ENCODE measurements at regions of chr6 and their contacts with region 1.

Region 1: DNA sequence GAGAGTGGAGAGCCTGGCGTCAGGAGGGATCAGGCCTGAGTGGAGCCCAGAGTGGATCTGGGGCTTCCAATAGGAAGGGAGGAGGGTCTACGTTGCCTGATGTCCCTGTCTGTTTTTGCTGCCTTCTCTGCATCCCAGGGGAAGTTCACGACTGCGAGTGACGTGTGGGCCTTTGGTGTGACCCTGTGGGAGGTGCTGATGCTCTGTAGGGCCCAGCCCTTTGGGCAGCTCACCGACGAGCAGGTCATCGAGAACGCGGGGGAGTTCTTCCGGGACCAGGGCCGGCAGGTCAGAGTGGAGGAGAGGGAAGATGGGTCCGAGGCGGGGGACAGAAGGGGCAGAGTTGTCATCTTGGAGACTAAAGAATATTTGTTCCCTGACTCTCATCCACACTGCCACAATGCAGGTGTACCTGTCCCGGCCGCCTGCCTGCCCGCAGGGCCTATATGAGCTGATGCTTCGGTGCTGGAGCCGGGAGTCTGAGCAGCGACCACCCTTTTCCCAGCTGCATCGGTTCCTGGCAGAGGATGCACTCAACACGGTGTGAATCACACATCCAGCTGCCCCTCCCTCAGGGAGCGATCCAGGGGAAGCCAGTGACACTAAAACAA is 9.2 kb upstream of the GTF2H4 start:
- DNase-seq: no peak
- ATAC-seq: 0 out of 2 replicates have a peak, but pooled peaks have one; percentile 12
- H3K4me3 ChIP-seq: no peak overlapping the region
- H3K27ac ChIP-seq: no peak overlapping the region
- H3K4me1 ChIP-seq: no peaks in the 10 kb centered on the region
- H3K27me3 ChIP-seq: no peaks in the 10 kb centered on the region
- CTCF ChIP-seq: no peak

Region 2: GRCh38 chr6:30781743-30782424 is 117.0 kb before region 1 on chr6:
- CTCF ChIA-PET with region 1: no interaction called
- POLR2A ChIA-PET with region 1: no interaction called
- in situ Hi-C with region 1: no loop called
- intact Hi-C with region 1: no loop called
- DNase-seq: peak; percentile 98
- ATAC-seq: peak; percentile 78
- H3K4me3 ChIP-seq: peak overlapping the region in 1 of 2 experiments; percentile 24; a peak in 2 of 4 replicates
- H3K27ac ChIP-seq: peak overlapping the region; percentile 90
- H3K4me1 ChIP-seq: peaks cover 62% of the 10 kb centered on the region
- H3K27me3 ChIP-seq: no peaks in the 10 kb centered on the region
- CTCF ChIP-seq: no peak

Region 3: DNA sequence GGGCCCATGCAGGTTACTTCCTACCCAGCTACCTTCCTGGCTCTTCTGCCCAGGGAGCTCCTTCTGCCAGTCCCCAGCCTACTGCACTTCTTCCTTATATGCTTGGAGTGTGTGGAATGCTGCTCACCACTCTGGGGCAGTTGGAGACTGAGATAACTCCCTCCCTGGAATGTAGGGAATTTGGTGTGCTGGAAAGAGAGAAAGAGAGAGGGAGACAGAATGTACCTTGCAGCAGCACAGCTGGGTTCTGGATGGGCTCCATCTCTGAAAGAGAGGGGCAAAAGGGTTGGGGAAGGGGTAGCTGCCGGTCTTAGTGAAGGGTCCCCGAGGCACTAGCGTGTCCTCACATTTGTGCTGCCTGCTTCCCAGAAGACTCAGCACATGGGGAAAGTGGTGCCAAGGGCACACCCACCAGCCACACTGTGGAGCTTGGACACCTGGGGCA is 54.7 kb before region 1 on chr6:
- CTCF ChIA-PET with region 1: no interaction called
- POLR2A ChIA-PET with region 1: interaction called, 10 read pairs
- in situ Hi-C with region 1: no loop called
- intact Hi-C with region 1: no loop called
- DNase-seq: no peak
- ATAC-seq: peak; percentile 90
- H3K4me3 ChIP-seq: no peak overlapping the region
- H3K27ac ChIP-seq: peak overlapping the region; percentile 78
- H3K4me1 ChIP-seq: peaks cover 33% of the 10 kb centered on the region
- H3K27me3 ChIP-seq: no peaks in the 10 kb centered on the region
- CTCF ChIP-seq: no peak

Region 4: DNA sequence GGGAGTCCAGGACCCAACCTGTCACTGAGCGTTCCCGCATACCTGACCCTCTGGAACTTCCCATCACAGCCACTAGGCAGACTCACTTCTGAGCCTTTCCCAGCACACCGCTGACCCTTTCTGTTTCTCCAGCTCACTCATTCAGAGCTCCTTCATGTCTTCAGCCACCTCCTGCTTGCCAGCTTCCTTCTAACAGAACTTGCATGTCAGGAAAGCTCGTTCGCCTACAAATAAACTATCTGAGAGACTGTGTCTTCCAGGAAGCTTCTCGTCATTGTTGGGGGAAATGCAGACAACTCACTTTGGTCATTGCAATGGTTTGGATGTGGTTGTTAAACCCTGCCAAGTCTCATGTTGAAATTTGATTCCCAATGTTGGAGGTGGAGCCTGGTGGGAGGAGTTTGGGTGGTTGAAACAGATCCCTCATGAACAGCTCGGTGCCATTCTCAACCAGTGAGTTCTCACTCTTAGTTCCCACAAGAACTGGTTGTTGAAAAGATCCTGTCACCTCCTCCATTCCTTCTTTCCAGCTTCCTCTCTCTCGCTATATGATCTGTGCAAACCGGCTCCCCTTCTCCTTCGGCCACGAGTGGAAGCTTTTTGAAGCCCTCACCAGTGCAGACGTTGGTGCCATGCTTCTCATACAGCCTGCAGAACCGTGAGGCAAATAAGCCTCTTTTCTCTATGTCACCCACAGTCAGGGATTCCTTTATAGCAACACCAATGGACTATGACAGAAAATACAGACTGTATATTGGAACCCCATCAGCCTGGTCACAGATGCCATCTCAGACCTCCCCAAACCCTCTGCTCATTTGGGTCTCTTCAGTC is 83.3 kb after region 1 on chr6:
- CTCF ChIA-PET with region 1: no interaction called
- POLR2A ChIA-PET with region 1: no interaction called
- in situ Hi-C with region 1: no loop called
- intact Hi-C with region 1: no loop called
- DNase-seq: no peak
- ATAC-seq: peak; percentile 82; the same call in 1 of the 2 replicates
- H3K4me3 ChIP-seq: no peak overlapping the region
- H3K27ac ChIP-seq: no peak overlapping the region
- H3K4me1 ChIP-seq: 0 out of 2 replicates have a peak, but pooled peaks cover 4% of the 10 kb centered on the region
- H3K27me3 ChIP-seq: peaks cover 2% of the 10 kb centered on the region; the same call in 1 of the 2 replicates
- CTCF ChIP-seq: no peak

Region 5: DNA sequence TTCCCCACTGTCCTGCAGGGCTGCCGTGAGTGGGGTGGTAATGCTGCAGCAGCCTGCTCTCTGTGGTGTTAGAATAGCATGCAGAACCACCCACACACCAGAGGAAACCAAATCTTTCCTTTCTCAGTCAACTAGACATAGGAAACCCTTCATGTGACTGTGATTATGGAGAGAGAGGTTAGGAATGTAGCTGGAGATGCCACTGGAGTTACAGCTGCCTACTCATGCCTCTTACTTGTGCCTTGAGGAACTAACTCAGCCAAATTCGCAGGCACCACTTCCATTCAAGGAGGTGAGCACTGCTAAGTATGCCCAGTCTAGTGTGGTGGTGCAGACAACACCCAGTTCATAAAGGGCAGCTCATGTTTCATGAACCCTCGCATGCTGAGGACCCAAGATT is 138.8 kb after region 1 on chr6:
- CTCF ChIA-PET with region 1: no interaction called
- POLR2A ChIA-PET with region 1: no interaction called
- in situ Hi-C with region 1: no loop called
- intact Hi-C with region 1: no loop called
- DNase-seq: no peak
- ATAC-seq: no peak
- H3K4me3 ChIP-seq: no peak overlapping the region
- H3K27ac ChIP-seq: no peak overlapping the region
- H3K4me1 ChIP-seq: peaks cover 4% of the 10 kb centered on the region
- H3K27me3 ChIP-seq: no peaks in the 10 kb centered on the region
- CTCF ChIP-seq: no peak